T-cell (primary cell): ENCODE measurements at regions of chr20 and their contacts with region 1.

Region 1: DNA sequence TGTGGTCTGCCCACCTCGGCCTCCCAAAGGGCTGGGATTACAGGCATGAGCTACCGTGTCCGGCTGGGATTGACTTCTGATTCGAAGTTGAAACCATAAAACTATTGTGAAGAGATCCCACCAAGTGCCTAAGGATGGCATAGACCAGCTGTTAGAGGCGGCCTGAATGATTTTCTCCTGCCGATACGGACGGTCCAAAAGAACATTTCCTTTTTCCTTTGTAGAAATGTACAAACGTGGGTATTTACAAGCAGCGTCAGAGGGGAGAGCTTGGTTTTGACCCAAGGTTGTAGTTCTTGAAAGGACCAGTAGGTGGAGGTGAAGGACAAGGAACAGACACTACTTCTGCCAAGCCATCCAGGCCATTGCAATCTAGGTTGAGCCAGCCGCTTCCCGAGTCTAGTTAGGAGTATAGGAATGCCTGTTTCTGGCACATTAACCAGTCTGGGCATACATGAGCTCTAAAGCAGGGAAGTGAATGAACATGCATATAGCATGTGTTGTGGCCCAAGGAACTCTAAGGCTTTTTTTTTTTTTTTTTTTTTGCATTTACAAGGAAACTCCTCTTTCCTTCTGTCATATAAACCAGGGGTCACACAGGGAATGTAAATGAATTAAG is 29.1 kb downstream of the MOCS3 start:
- DNase-seq: peak in 34 of 35 experiments; percentile 10 to 87 (median 42)
- ATAC-seq: peak; percentile 83 to 95 (median 88)
- H3K4me3 ChIP-seq: no peak overlapping the region
- H3K4me3 Mint-ChIP-seq: no peak overlapping the region
- H3K27ac ChIP-seq: no peak overlapping the region
- H3K27ac Mint-ChIP-seq: no peak overlapping the region
- H3K4me1 ChIP-seq: no peaks in the 10 kb centered on the region
- H3K4me1 Mint-ChIP-seq: peaks cover 0 to 2% (median 2%) of the 10 kb centered on the region in 3 donors
- H3K27me3 ChIP-seq: peaks cover 4 to 34% of the 10 kb centered on the region in 2 experiments
- H3K27me3 Mint-ChIP-seq: peaks cover 22 to 37% of the 10 kb centered on the region in 2 donors

Region 2: DNA sequence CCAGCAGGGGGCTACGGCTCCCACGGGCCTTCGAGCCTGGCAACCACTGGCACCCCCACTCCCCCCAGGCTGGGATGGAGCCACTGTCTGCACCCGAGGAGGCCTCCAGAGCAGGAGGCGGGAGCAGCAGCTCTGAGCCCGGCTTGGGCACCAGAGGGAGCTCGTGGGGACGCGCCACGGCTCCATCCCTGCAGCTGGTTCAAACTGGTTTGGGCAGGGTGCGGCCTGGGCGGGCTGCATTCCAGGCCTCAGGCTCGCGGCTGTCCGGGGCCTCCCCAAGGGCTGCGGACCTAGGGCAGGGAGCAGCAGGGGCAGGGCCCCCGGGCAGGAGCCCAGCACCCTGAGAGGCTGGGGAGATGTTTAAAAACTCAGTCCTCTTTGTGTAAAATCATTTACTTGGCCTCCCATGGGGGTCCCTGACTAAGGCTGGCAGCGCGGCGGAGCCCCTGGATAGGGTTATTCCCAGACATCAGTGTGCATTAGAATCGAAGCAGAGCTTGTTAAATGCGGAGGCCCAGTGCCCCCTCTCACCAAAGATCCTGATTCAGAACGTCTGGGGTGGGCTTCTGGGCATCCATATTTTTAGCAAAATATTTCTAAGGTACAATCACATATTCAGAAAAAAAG is 196.9 kb before region 1 on chr20:
- CTCF ChIA-PET with region 1: interaction called in 1 of 2 experiments, 15 read pairs
- POLR2A ChIA-PET with region 1: no interaction called
- DNase-seq: peak; percentile 43 to 84 (median 67)
- ATAC-seq: peak; percentile 59 to 69 (median 62)
- H3K4me3 ChIP-seq: peak overlapping the region in 1 of 2 donors; percentile 35
- H3K4me3 Mint-ChIP-seq: peak overlapping the region in 1 of 3 donors; percentile 30
- H3K27ac ChIP-seq: peak overlapping the region; percentile 93
- H3K27ac Mint-ChIP-seq: peak overlapping the region; percentile 86 to 91
- H3K4me1 ChIP-seq: peaks cover 2 to 21% of the 10 kb centered on the region in 2 experiments
- H3K4me1 Mint-ChIP-seq: peaks cover 8 to 15% (median 11%) of the 10 kb centered on the region in 3 donors
- H3K27me3 ChIP-seq: peaks cover 0 to under 1% of the 10 kb centered on the region in 2 experiments
- H3K27me3 Mint-ChIP-seq: no peaks in the 10 kb centered on the region

Region 3: GRCh38 chr20:51306503-51307358 is 319.0 kb after region 1 on chr20:
- CTCF ChIA-PET with region 1: interaction called, 9 to 25 read pairs
- POLR2A ChIA-PET with region 1: no interaction called
- DNase-seq: peak; percentile 20 to 80 (median 61)
- ATAC-seq: peak; percentile 86 to 92 (median 90)
- H3K4me3 ChIP-seq: no peak overlapping the region
- H3K4me3 Mint-ChIP-seq: no peak overlapping the region
- H3K27ac ChIP-seq: no peak overlapping the region
- H3K27ac Mint-ChIP-seq: no peak overlapping the region
- H3K4me1 ChIP-seq: peaks cover 0 to 6% of the 10 kb centered on the region in 2 experiments
- H3K4me1 Mint-ChIP-seq: peaks cover 0 to 4% (median 2%) of the 10 kb centered on the region in 3 donors
- H3K27me3 ChIP-seq: peaks cover 0 to 12% of the 10 kb centered on the region in 2 experiments
- H3K27me3 Mint-ChIP-seq: peaks cover 14 to 19% of the 10 kb centered on the region in 2 donors

Region 4: DNA sequence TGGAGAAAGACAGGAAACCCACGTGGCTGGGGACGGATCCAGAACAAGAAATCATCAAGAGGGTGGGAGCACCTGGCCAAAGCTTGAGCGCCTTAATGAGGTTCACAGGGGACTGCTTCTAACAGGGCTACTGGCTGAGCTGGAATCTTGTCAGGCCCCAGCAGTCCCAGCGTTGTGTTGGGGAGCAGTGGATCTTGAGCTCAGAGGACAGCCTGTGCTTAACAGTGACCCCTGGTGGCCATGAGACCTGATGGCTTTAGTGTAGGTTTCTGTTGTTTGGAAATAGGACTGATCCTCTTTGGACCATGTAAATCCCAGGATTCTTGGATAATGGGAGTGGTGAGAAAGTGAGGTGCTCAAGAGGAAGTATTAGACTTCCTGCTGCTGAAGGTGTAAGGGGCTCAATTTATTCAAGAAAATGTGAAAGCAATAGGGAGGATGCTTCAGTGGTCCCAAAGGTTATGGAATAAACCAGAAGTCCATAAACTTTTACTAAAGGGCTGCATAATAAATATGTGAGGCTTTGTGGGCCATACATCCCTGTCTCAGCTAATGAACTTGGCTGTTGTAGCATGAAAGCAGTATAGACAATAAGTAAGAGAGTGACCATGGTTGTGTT is 338.6 kb after region 1 on chr20:
- CTCF ChIA-PET with region 1: interaction called, 11 to 50 read pairs
- POLR2A ChIA-PET with region 1: no interaction called
- DNase-seq: peak in 21 of 35 experiments; percentile 11 to 73 (median 28)
- ATAC-seq: peak in 1 of 4 experiments; percentile 61
- H3K4me3 ChIP-seq: no peak overlapping the region
- H3K4me3 Mint-ChIP-seq: no peak overlapping the region
- H3K27ac ChIP-seq: no peak overlapping the region
- H3K27ac Mint-ChIP-seq: no peak overlapping the region
- H3K4me1 ChIP-seq: no peaks in the 10 kb centered on the region
- H3K4me1 Mint-ChIP-seq: no peaks in the 10 kb centered on the region
- H3K27me3 ChIP-seq: peaks cover 0 to 27% of the 10 kb centered on the region in 2 experiments
- H3K27me3 Mint-ChIP-seq: peaks cover 6 to 8% of the 10 kb centered on the region in 2 donors